Activated CD4-positive, alpha-beta memory T cell treated with anti-CD3 and anti-CD28 coated beads for 36 hours (primary cell): ENCODE measurements at regions of chr22 and their contacts with region 1.

Region 1: GRCh38 chr22:39117585-39118191 is 20.6 kb downstream of the APOBEC3H start:
- DNase-seq: peak; percentile 89
- H3K4me3 Mint-ChIP-seq: peak overlapping the region; percentile 11
- H3K27ac Mint-ChIP-seq: peak overlapping the region; percentile 95
- H3K4me1 Mint-ChIP-seq: peaks cover 62% of the 10 kb centered on the region
- H3K27me3 Mint-ChIP-seq: no peaks in the 10 kb centered on the region

Region 2: DNA sequence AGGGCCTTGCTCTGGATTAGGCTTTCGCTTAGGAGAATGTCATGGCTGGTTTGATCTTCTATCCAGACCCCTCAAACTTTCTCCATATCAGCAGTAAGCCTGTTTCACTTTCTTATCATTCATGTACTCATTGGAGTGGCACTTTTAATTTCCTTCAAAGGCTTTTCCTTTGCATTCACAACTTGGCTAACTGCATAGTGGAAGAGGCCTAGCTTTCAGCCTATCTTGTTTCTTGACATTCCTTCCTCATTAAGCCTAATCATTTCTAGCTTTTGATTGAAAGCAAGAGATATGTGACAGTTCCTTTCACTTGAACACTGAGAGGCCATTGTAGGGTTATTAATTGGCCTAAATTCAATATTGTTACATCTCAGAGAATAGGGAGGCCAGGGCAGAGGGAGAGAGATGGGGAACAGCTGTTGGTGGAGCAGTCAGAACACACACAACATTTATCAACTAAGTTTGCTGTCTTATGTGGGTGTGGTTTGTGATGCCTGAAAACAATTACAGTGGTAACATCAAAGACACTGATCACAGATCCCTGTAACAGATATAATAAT is 198.0 kb before region 1 on chr22:
- CTCF ChIA-PET with region 1: no interaction called
- POLR2A ChIA-PET with region 1: no interaction called
- intact Hi-C with region 1: no loop called
- DNase-seq: no peak
- H3K4me3 Mint-ChIP-seq: no peak overlapping the region
- H3K27ac Mint-ChIP-seq: no peak overlapping the region
- H3K4me1 Mint-ChIP-seq: peaks cover 8% of the 10 kb centered on the region
- H3K27me3 Mint-ChIP-seq: peaks cover 19% of the 10 kb centered on the region

Region 3: GRCh38 chr22:38981992-38982927 is 135.4 kb before region 1 on chr22 and contains the start of gene APOBEC3B:
- CTCF ChIA-PET with region 1: no interaction called
- POLR2A ChIA-PET with region 1: interaction called, 4 read pairs
- intact Hi-C with region 1: loop called (anchors 1 kb)
- DNase-seq: peak; percentile 90
- H3K4me3 Mint-ChIP-seq: peak within 1 kb of the TSS; percentile 64
- H3K27ac Mint-ChIP-seq: peak within 1 kb of the TSS; percentile 83
- H3K4me1 Mint-ChIP-seq: peaks cover 55% of the 10 kb centered on the region
- H3K27me3 Mint-ChIP-seq: no peaks in the 10 kb centered on the region
- total RNA-seq, gene APOBEC3B: 43.9 to 44.3 TPM

Region 4: DNA sequence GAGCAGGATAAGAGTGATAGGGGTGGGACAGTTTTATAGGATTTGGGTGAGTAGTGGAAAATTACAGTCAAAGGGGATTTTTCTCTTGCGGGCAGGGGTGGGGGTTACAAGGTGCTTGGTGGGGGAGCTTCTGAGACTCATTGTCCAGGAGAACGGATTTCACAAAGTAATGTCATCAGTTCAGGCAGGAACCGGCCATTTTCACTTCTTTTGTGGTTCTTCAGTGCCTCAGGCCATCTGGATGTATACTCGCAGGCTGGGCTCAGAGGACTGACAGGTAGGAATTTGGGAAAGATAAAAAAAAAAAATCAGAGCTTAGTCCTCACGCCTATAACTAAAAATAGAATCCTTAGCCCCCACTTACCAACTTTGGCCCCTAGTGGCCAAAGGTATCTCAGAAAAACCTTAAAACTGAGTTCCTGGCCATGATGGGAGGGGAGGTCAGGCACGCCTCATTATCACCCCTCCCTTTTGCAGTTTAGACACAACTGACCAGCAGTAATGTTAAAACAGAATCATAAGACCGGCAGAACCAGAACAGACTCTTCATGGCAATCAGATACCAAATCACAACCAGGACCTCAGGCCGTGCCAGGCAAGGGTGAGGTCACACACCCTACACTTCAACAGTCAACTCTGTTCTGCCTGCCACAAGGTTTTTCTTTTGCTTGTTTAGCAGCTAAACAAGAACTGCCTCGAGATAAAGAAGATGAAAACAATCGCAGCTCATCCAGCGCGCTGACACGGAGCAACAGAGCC is 49.5 kb before region 1 on chr22:
- CTCF ChIA-PET with region 1: interaction called, 3 read pairs
- POLR2A ChIA-PET with region 1: interaction called, 3 read pairs
- intact Hi-C with region 1: loop called (anchors 10 kb)
- DNase-seq: no peak
- H3K4me3 Mint-ChIP-seq: no peak overlapping the region
- H3K27ac Mint-ChIP-seq: no peak overlapping the region
- H3K4me1 Mint-ChIP-seq: peaks cover 5% of the 10 kb centered on the region
- H3K27me3 Mint-ChIP-seq: no peaks in the 10 kb centered on the region

Region 5: GRCh38 chr22:39090426-39091064 is 27.1 kb before region 1 on chr22:
- CTCF ChIA-PET with region 1: interaction called, 7 read pairs
- POLR2A ChIA-PET with region 1: interaction called, 9 read pairs
- intact Hi-C with region 1: loop called (anchors 1 kb)
- DNase-seq: peak; percentile 95
- H3K4me3 Mint-ChIP-seq: peak overlapping the region; percentile 50
- H3K27ac Mint-ChIP-seq: peak overlapping the region; percentile 96
- H3K4me1 Mint-ChIP-seq: peaks cover 85% of the 10 kb centered on the region
- H3K27me3 Mint-ChIP-seq: no peaks in the 10 kb centered on the region